Calu3 (cell line): ENCODE measurements at regions of chr11 and their contacts with region 1.

Region 1: GRCh38 chr11:80593648-80594380 is 1153.0 kb upstream of the TENM4 start:
- DNase-seq: peak; percentile 38
- H3K4me3 Mint-ChIP-seq: no peak overlapping the region
- H3K27ac Mint-ChIP-seq: peak overlapping the region; percentile 32
- H3K4me1 Mint-ChIP-seq: peaks cover 29% of the 10 kb centered on the region
- H3K27me3 Mint-ChIP-seq: no peaks in the 10 kb centered on the region
- CTCF ChIP-seq: no peak

Region 2: GRCh38 chr11:80519596-80520506 is 74.0 kb before region 1 on chr11:
- CTCF ChIA-PET with region 1: no interaction called
- intact Hi-C with region 1: loop called (anchors 2 kb)
- DNase-seq: no peak
- H3K4me3 Mint-ChIP-seq: no peak overlapping the region
- H3K27ac Mint-ChIP-seq: no peak overlapping the region
- H3K4me1 Mint-ChIP-seq: no peaks in the 10 kb centered on the region
- H3K27me3 Mint-ChIP-seq: no peaks in the 10 kb centered on the region
- CTCF ChIP-seq: no peak